A673 (cell line): ENCODE measurements at regions of chr11 and their contacts with region 1.

Region 1: DNA sequence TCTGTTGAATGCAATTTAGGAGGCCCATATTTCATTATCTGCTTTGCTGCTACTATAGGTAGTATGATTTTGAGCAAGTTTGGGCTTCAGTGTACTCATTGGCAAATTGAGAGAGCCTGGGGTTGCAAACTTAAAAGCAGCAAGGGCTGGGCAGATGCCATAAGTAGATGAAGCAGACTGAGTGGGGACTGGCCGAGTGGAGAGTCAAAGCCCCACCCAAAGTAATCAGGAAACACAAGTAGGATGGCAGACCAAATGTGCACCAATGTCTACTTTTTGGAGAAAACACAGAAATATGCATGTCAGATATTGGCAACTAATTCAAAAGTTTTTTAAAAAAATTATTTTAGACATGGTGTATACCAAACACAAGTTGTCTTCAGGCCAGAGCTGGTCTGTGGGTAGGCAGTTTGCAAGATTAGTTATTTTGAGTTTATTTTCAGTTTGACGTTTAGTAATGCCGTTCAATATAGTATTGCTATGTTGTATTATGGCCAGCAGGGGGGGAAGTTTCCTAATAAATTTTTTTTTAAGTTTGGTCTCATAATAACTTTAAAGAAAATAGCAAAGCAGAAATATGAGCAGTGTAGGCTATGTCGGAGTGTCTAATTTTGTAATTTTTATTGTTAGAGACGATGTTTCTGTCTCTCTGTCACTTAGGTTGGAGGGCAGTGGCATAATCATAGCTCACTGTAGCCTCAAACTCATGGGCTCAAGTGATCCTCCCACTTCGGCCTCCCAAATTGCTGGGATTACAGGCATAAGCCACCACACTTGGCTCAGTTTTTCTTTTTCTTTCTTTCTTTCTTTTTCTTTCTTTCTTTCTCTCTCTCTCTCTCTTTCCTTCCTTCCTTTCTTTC is 105.1 kb downstream of the HIPK3 start:
- DNase-seq: peak; percentile 86
- H3K4me3 ChIP-seq: no peak overlapping the region
- H3K27ac ChIP-seq: no peak overlapping the region
- H3K4me1 ChIP-seq: no peaks in the 10 kb centered on the region
- H3K27me3 ChIP-seq: no peaks in the 10 kb centered on the region
- CTCF ChIP-seq: peak; percentile 97

Region 2: GRCh38 chr11:33344611-33345010 is 17.7 kb before region 1 on chr11:
- CTCF ChIA-PET with region 1: interaction called, 3 read pairs
- POLR2A ChIA-PET with region 1: interaction called, 11 read pairs
- intact Hi-C with region 1: no loop called
- DNase-seq: peak; percentile 37
- H3K4me3 ChIP-seq: no peak overlapping the region
- H3K27ac ChIP-seq: no peak overlapping the region
- H3K4me1 ChIP-seq: no peaks in the 10 kb centered on the region
- H3K27me3 ChIP-seq: no peaks in the 10 kb centered on the region
- CTCF ChIP-seq: 0 out of 2 replicates have a peak, but pooled peaks have one; percentile 37

Region 3: GRCh38 chr11:33475993-33476392 is 113.7 kb after region 1 on chr11:
- CTCF ChIA-PET with region 1: no interaction called
- POLR2A ChIA-PET with region 1: interaction called, 10 read pairs
- intact Hi-C with region 1: no loop called
- DNase-seq: peak; percentile 79
- H3K4me3 ChIP-seq: no peak overlapping the region
- H3K27ac ChIP-seq: no peak overlapping the region
- H3K4me1 ChIP-seq: no peaks in the 10 kb centered on the region
- H3K27me3 ChIP-seq: peaks cover 50% of the 10 kb centered on the region
- CTCF ChIP-seq: no peak

Region 4: GRCh38 chr11:33542921-33543320 is 180.6 kb after region 1 on chr11:
- CTCF ChIA-PET with region 1: no interaction called
- POLR2A ChIA-PET with region 1: no interaction called
- intact Hi-C with region 1: loop called (anchors 2 kb)
- DNase-seq: peak; percentile 80
- H3K4me3 ChIP-seq: no peak overlapping the region
- H3K27ac ChIP-seq: no peak overlapping the region
- H3K4me1 ChIP-seq: no peaks in the 10 kb centered on the region
- H3K27me3 ChIP-seq: peaks cover 43% of the 10 kb centered on the region
- CTCF ChIP-seq: peak; percentile 94

Region 5: GRCh38 chr11:33736148-33736809 is 374.0 kb after region 1 on chr11 and contains the start of gene CD59:
- CTCF ChIA-PET with region 1: no interaction called
- POLR2A ChIA-PET with region 1: no interaction called
- intact Hi-C with region 1: loop called (anchors 2 kb)
- DNase-seq: peak; percentile 99
- H3K4me3 ChIP-seq: peak within 1 kb of the TSS; percentile 67
- H3K27ac ChIP-seq: peak within 1 kb of the TSS; percentile 74
- H3K4me1 ChIP-seq: peaks cover 22% of the 10 kb centered on the region
- H3K27me3 ChIP-seq: no peaks in the 10 kb centered on the region
- CTCF ChIP-seq: no peak
- total RNA-seq, gene CD59: 193 and 204 TPM in 2 replicates

Region 6: DNA sequence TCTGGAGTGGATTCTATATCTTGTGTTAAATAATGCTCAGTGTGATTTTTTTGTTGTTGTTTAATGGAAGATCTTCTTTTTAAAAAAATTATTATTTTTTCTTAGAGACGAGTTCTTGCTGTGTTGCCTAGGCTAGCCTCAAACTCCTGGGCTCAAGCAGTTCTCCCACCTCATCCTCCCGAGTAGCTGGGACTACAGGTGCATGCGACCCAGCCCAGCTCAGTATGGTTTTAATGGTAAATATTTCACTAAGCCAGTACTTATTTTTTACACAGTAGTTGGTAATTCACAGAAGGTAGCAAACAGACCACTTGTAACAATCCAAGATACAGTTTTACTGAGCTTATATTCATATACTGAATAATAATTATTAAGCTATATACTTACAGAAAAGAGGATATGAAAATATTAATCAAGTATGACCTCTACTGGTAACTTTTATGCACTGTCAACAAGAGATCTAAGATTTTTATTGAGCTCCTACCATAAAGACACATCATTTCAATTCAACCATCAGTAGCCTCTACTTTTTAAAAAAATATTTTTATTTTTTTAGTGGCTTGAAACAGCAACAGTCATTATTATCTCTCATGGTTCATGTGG is 380.1 kb after region 1 on chr11:
- CTCF ChIA-PET with region 1: interaction called, 10 read pairs
- POLR2A ChIA-PET with region 1: no interaction called
- intact Hi-C with region 1: loop called (anchors 2 kb)
- DNase-seq: peak; percentile 62
- H3K4me3 ChIP-seq: no peak overlapping the region
- H3K27ac ChIP-seq: no peak overlapping the region
- H3K4me1 ChIP-seq: no peaks in the 10 kb centered on the region
- H3K27me3 ChIP-seq: no peaks in the 10 kb centered on the region
- CTCF ChIP-seq: peak; percentile 87

Region 7: GRCh38 chr11:33842236-33842915 is 480.1 kb after region 1 on chr11:
- CTCF ChIA-PET with region 1: no interaction called
- POLR2A ChIA-PET with region 1: no interaction called
- intact Hi-C with region 1: no loop called
- DNase-seq: no peak
- H3K4me3 ChIP-seq: no peak overlapping the region
- H3K27ac ChIP-seq: no peak overlapping the region
- H3K4me1 ChIP-seq: peaks cover 21% of the 10 kb centered on the region
- H3K27me3 ChIP-seq: no peaks in the 10 kb centered on the region
- CTCF ChIP-seq: no peak